AG04449 (cell line): ENCODE measurements at regions of chr9 and their contacts with region 1.

Region 1: GRCh38 chr9:92634712-92635605 is 35.0 kb downstream of the IPPK start:
- DNase-seq: no peak
- H3K4me3 ChIP-seq: no peak overlapping the region
- CTCF ChIP-seq: peak; percentile 94

Region 2: GRCh38 chr9:92332577-92333281 is 302.2 kb before region 1 on chr9:
- CTCF ChIA-PET with region 1: interaction called, 89 read pairs
- POLR2A ChIA-PET with region 1: no interaction called
- DNase-seq: peak; percentile 19
- H3K4me3 ChIP-seq: no peak overlapping the region
- CTCF ChIP-seq: no peak

Region 3: DNA sequence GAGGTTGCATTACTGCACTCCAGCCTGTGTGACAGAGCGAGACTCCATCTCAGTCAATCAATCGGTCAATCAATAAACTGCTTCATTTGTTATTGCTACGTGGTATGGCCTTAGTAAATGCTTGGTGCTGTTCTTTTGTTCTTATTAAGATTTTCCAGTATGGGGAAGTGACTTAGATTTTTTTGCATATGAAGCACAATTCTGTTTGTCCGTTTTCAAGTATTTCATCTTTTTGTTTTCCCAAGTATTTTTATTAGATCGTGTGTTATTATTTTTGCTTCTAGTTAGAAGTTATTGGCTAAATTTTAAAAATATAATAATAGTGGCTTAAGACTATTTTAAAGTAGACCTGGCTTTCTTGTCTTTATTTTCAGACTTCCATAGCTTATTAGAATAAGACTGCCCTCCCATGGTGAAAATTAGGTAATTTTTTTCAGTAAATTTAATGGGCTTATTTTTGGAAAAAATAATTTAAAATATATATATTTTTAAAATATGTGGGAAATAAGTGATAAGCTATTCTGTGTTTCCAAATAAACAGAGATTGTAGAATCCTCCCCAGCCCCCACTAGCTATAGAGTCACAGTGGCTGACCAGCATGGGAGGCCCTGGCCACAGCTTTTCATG is 195.9 kb before region 1 on chr9:
- CTCF ChIA-PET with region 1: interaction called, 40 read pairs
- POLR2A ChIA-PET with region 1: no interaction called
- DNase-seq: no peak
- H3K4me3 ChIP-seq: no peak overlapping the region
- CTCF ChIP-seq: no peak

Region 4: DNA sequence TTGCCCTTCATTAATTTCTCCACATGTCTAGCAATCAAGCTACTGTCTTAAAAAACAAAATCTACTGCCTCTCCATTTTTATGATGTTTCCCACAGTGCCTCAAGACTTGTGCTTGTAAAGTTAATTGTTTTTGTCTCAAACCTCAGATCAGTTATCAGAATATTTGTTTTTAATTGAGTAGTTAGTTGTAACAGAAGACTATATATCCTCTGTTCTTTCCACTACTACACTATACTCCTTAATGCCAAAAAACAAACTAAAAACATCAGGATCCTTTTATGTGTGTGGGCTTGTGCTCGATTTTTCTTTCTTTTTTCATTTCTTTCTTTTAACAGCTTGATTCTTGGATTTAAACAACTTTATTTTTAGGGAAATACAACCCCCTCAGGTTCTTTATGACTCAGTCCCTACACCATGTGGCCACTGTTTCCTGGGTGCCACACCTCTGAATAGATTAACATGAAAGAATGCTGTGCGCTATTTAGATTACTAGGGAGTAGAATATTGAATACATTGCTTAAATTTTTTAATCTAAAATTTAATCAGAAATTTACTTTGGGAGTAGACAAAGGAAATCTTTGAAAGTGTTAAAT is 153.8 kb before region 1 on chr9:
- CTCF ChIA-PET with region 1: interaction called, 17 read pairs
- POLR2A ChIA-PET with region 1: no interaction called
- DNase-seq: no peak
- H3K4me3 ChIP-seq: no peak overlapping the region
- CTCF ChIP-seq: no peak

Region 5: GRCh38 chr9:92650839-92651621 is 16.1 kb after region 1 on chr9:
- CTCF ChIA-PET with region 1: interaction called, 30 read pairs
- POLR2A ChIA-PET with region 1: no interaction called
- DNase-seq: no peak
- H3K4me3 ChIP-seq: no peak overlapping the region
- CTCF ChIP-seq: no peak